Caco-2 (cell line): ENCODE measurements at regions of chr20 and their contacts with region 1.

Region 1: DNA sequence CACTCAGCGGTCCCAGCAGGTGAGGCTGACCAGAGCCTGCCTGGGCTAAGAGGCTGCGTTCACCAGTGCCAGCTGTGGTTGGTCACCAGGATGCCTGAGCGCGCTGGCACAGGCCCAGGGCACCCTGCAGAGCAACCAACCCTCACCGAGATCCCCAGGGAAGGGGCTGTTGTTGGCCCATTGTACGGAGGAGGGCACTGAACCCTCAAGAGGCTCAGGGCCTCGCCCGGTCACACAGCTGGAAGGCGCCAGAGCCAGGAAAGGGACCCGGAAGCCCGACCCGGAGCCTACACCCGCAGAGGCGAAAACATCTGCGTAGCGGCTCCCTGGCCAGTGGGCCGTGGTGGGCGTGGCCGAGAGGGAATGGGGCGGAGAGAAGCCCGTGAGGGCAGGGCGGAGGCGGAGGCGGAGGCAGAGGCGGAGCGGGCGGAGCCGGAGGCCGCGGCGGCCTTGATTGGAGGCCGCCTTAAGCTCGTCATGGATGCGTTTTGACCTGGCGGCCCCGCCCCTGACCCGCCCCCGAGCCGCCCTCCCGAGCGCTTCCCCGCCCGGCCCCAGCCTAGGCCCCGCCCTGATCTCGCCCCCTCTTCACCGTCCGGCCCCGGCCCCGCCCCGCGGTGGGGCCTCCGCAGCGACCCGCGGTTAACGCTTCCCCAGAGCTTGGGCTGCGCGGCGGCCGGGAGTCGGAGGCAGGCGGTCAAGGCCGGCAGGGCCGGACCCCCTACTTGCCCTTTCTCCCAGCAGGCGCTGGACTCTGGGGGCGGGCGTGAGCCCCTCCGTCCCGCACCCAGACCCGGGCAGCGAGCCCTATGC is 2.2 kb upstream of the MRGBP start:
- DNase-seq: peak; percentile 99 to 100
- H3K4me3 ChIP-seq: peak overlapping the region; percentile 57
- H3K4me3 Mint-ChIP-seq: peak overlapping the region; percentile 89
- H3K27ac Mint-ChIP-seq: peak overlapping the region; percentile 85
- H3K4me1 ChIP-seq: peaks cover 21% of the 10 kb centered on the region
- H3K4me1 Mint-ChIP-seq: peaks cover 15% of the 10 kb centered on the region
- H3K27me3 ChIP-seq: no peaks in the 10 kb centered on the region
- H3K27me3 Mint-ChIP-seq: no peaks in the 10 kb centered on the region
- CTCF ChIP-seq: no peak

Region 2: DNA sequence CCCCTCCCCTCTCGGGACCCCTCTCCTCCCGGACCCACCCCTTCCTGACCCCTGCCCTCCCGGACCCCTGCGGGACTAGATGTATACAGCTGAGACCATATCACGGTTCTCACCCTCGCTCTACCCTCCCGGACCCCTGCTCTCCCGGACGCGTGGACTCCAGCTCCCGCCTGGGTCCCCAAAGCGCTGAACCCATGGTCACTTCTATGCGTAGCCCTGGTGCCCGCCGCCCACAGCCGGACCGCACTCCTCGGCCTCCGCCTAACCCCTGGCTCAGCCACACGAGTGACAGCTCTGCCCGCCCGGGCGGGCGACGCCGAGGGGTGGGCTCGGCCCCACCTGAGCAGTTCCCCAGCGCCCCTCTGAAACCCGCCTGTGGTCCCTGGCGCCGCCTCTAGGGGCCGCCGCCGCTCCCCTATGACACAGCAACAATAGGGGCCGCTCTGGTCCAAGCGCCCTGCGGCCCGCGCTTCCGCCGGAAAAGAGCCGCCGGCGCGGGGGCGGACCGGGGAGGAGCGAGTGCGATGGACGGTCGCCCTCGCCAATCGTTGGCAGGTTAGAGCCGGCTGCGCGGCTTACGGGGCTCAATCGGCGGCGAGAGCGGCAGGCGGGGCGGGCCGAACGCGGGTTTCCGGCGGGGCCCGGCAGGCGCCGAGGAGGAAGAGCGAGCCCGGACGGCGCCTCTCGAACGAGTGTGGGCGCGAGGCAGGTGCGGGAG is 491.6 kb before region 1 on chr20 and contains the start of gene ADRM1:
- CTCF ChIA-PET with region 1: no interaction called
- POLR2A ChIA-PET with region 1: no interaction called
- intact Hi-C with region 1: loop called (anchors 10 kb)
- DNase-seq: peak; percentile 99 to 100
- H3K4me3 ChIP-seq: peak within 1 kb of the TSS; percentile 98
- H3K4me3 Mint-ChIP-seq: peak within 1 kb of the TSS; percentile 89
- H3K27ac Mint-ChIP-seq: peak within 1 kb of the TSS; percentile 97
- H3K4me1 ChIP-seq: peaks cover 20% of the 10 kb centered on the region
- H3K4me1 Mint-ChIP-seq: peaks cover 30% of the 10 kb centered on the region
- H3K27me3 ChIP-seq: no peaks in the 10 kb centered on the region
- H3K27me3 Mint-ChIP-seq: no peaks in the 10 kb centered on the region
- CTCF ChIP-seq: peak; percentile 100
- total RNA-seq, gene ADRM1: 261 and 263 TPM in 2 replicates

Region 3: GRCh38 chr20:62477669-62478455 is 316.3 kb before region 1 on chr20:
- CTCF ChIA-PET with region 1: interaction called, 12 read pairs
- POLR2A ChIA-PET with region 1: no interaction called
- intact Hi-C with region 1: no loop called
- DNase-seq: peak; percentile 81 to 86
- H3K4me3 ChIP-seq: no peak overlapping the region
- H3K4me3 Mint-ChIP-seq: no peak overlapping the region
- H3K27ac Mint-ChIP-seq: peak overlapping the region; percentile 72
- H3K4me1 ChIP-seq: peaks cover 57% of the 10 kb centered on the region
- H3K4me1 Mint-ChIP-seq: peaks cover 39% of the 10 kb centered on the region
- H3K27me3 ChIP-seq: no peaks in the 10 kb centered on the region
- H3K27me3 Mint-ChIP-seq: no peaks in the 10 kb centered on the region
- CTCF ChIP-seq: peak; percentile 88 to 96

Region 4: DNA sequence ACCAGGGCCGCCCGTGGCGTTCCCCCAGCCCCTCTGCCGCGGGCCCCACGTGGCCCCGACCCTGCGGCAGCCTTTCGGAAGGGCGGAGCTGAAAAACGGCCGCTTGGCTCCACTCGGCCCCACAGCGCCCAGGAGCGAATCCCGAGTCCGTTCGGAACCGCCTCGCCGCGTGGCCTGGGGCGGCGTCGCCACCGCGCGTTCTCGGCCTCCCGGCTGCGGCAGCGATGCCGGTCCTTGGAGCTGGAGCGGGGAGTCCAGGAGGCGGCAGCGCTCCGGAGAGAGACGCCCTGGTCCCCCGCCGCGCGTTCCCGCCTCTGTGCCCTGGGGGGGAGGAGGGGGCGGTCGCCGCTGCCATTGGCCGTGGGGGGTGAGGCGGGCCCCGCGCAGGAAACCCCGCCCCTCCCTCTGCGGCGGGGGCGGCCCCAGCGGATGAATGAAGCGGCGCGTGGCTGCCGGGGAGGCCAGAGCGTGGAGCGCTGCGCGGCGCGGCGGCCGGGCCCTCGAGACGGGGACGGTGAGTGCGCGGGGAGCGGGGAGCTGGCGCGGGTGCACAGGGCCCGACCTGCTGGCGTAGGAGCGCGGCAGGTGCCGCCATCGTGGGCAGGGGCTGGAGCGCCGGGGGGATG is 152.0 kb before region 1 on chr20 and contains the start of gene SLCO4A1:
- CTCF ChIA-PET with region 1: interaction called, 6 read pairs
- POLR2A ChIA-PET with region 1: interaction called, 10 read pairs
- intact Hi-C with region 1: no loop called
- DNase-seq: peak; percentile 93 to 96
- H3K4me3 ChIP-seq: peak within 1 kb of the TSS; percentile 81
- H3K4me3 Mint-ChIP-seq: peak within 1 kb of the TSS; percentile 81
- H3K27ac Mint-ChIP-seq: no peak within 1 kb of the TSS
- H3K4me1 ChIP-seq: peaks cover 16% of the 10 kb centered on the region
- H3K4me1 Mint-ChIP-seq: no peaks in the 10 kb centered on the region
- H3K27me3 ChIP-seq: no peaks in the 10 kb centered on the region
- H3K27me3 Mint-ChIP-seq: peaks cover 5% of the 10 kb centered on the region
- CTCF ChIP-seq: no peak
- total RNA-seq, gene SLCO4A1: 18.7 and 23.6 TPM in 2 replicates

Region 5: DNA sequence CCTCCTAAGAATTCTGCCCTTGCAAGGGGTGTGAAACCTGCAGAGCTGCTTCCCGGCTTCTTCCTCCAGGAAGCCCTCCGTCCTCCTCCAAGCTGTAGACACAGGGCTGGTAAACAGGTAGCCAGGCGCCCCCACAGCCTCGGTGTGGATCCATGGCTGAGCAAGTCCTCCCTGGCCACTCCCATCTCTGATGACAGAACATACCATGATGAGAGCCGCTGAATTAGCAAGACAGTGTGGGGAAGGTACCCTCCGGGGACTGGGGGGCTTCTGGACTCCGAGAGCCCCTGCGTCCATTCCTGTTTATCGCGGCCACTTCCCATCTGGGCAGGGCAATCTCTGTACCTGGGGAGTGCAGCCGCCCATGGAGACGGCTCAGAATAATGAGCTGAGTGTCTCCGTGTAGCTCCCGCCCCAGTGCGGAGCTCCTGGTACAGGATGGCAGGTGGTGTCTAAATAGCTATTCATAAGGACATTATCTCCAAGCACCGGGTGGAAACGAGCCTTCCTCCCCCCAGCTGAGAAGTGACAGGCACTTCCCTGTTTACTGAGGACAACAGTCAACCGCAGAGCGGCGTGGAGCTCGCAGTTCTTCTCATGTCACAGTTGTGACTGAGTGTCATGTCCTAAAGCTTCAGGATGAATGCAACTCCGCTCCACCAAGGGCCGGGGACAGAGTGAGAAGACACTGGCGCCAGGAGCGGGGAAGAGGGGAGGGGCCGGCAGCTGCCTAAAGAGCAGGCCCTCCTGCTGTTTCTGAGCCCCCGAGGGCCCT is 108.2 kb before region 1 on chr20:
- CTCF ChIA-PET with region 1: interaction called, 25 read pairs
- POLR2A ChIA-PET with region 1: interaction called, 6 read pairs
- intact Hi-C with region 1: loop called (anchors 1 kb)
- DNase-seq: no peak
- H3K4me3 ChIP-seq: no peak overlapping the region
- H3K4me3 Mint-ChIP-seq: peak overlapping the region; percentile 20
- H3K27ac Mint-ChIP-seq: no peak overlapping the region
- H3K4me1 ChIP-seq: peaks cover 10% of the 10 kb centered on the region
- H3K4me1 Mint-ChIP-seq: peaks cover 9% of the 10 kb centered on the region
- H3K27me3 ChIP-seq: 0 out of 2 replicates have a peak, but pooled peaks cover 2% of the 10 kb centered on the region
- H3K27me3 Mint-ChIP-seq: peaks cover 11% of the 10 kb centered on the region
- CTCF ChIP-seq: no peak

Region 6: GRCh38 chr20:62782149-62782892 is 11.8 kb before region 1 on chr20:
- CTCF ChIA-PET with region 1: interaction called, 12 read pairs
- POLR2A ChIA-PET with region 1: interaction called, 6 read pairs
- intact Hi-C with region 1: no loop called
- DNase-seq: no peak
- H3K4me3 ChIP-seq: no peak overlapping the region
- H3K4me3 Mint-ChIP-seq: no peak overlapping the region
- H3K27ac Mint-ChIP-seq: no peak overlapping the region
- H3K4me1 ChIP-seq: no peaks in the 10 kb centered on the region
- H3K4me1 Mint-ChIP-seq: no peaks in the 10 kb centered on the region
- H3K27me3 ChIP-seq: no peaks in the 10 kb centered on the region
- H3K27me3 Mint-ChIP-seq: no peaks in the 10 kb centered on the region
- CTCF ChIP-seq: no peak